ENCODE measurements at regions of chr2 and their contacts with region 1.

Region 1: GRCh38 chr2:100205174-100205573 is 62.8 kb upstream of the AFF3 start:
- DNase-seq: no peak
- H3K4me3 ChIP-seq: no peak overlapping the region
- H3K4me3 Mint-ChIP-seq: no peak overlapping the region
- H3K27ac ChIP-seq: no peak overlapping the region
- H3K27ac Mint-ChIP-seq: peak overlapping the region in 1 of 7 donors; percentile 51
- H3K4me1 ChIP-seq: peaks cover 8 to 11% of the 10 kb centered on the region in 2 donors
- H3K4me1 Mint-ChIP-seq: peaks cover 16% of the 10 kb centered on the region
- H3K27me3 ChIP-seq: no peaks in the 10 kb centered on the region
- H3K27me3 Mint-ChIP-seq: peaks cover 0 to 3% (median 2%) of the 10 kb centered on the region in 3 donors
- CTCF ChIP-seq: no peak

Region 2: GRCh38 chr2:100184055-100184737 is 21.0 kb before region 1 on chr2:
- intact Hi-C with region 1: loop called in 1 of 2 experiments (anchors 2 kb)
- DNase-seq: peak; percentile 76 to 90 (median 77)
- H3K4me3 ChIP-seq: peak overlapping the region in 1 of 3 experiments; percentile 12
- H3K4me3 Mint-ChIP-seq: no peak overlapping the region
- H3K27ac ChIP-seq: peak overlapping the region; percentile 48 to 71
- H3K27ac Mint-ChIP-seq: peak overlapping the region; percentile 75 to 91 (median 87)
- H3K4me1 ChIP-seq: peaks cover 38 to 41% of the 10 kb centered on the region in 2 donors
- H3K4me1 Mint-ChIP-seq: peaks cover 47% of the 10 kb centered on the region
- H3K27me3 ChIP-seq: no peaks in the 10 kb centered on the region
- H3K27me3 Mint-ChIP-seq: no peaks in the 10 kb centered on the region
- CTCF ChIP-seq: no peak

Region 3: GRCh38 chr2:100291120-100291970 is 86.2 kb after region 1 on chr2:
- intact Hi-C with region 1: no loop called
- DNase-seq: no peak
- H3K4me3 ChIP-seq: no peak overlapping the region
- H3K4me3 Mint-ChIP-seq: no peak overlapping the region
- H3K27ac ChIP-seq: no peak overlapping the region
- H3K27ac Mint-ChIP-seq: no peak overlapping the region
- H3K4me1 ChIP-seq: no peaks in the 10 kb centered on the region
- H3K4me1 Mint-ChIP-seq: no peaks in the 10 kb centered on the region
- H3K27me3 ChIP-seq: no peaks in the 10 kb centered on the region
- H3K27me3 Mint-ChIP-seq: peaks cover 0 to 10% (median 2%) of the 10 kb centered on the region in 3 donors
- CTCF ChIP-seq: no peak

Measured in CD14-positive monocyte (primary cell).